ENCODE measurements at regions of chr11 and their contacts with region 1.

Region 1: DNA sequence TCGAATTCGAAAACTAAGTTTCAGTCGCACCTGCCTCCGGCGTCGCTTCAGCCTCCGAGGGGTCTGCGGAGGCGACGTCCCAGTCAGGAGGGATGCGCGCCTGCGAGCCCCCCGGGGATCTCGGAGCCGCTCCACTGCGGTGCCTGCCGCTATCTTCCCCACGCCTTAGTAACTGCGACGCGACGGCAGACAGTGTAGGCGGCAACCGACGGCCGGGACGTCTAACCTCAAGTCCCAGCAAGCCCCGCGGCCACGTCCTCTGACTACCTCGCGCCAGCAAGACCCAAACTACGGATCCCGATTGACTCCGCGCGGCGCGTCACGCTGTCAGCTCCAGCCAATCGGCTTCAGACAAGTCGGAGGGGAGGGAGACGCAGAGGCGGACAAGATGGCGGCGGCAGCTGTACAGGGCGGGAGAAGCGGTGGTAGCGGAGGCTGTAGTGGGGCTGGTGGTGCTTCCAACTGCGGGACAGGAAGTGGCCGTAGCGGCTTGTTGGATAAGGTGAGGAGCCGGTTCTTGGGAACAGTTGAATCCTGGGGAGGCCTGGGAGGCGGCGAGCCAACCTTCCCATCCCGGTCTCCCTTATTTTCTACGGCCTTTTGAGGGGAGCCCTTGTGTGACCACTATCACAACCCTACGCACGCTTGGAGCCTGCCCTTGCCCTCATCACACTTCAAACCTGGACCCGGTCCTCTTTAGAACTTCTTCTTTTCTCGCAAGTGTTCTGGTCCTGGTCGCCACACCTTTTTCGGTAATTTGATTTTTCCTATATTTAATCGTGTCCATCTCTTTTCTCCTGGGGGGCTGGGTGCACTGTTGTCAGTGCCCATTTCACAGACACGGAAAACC is at the starts of genes SPCS2 and XRRA1:
- DNase-seq: peak; percentile 90
- ATAC-seq: peak; percentile 93
- H3K4me3 Mint-ChIP-seq: peak within 1 kb of the TSS; percentile 97
- H3K27ac Mint-ChIP-seq: peak within 1 kb of the TSS; percentile 97
- H3K4me1 Mint-ChIP-seq: peaks cover 72% of the 10 kb centered on the region
- H3K27me3 Mint-ChIP-seq: no peaks in the 10 kb centered on the region
- CTCF ChIP-seq: no peak
- total RNA-seq, gene SPCS2: 129 and 138 TPM in 2 replicates
- total RNA-seq, gene XRRA1: 40.0 and 50.5 TPM in 2 replicates

Region 2: GRCh38 chr11:74592441-74593362 is 356.4 kb before region 1 on chr11 and contains the start of gene POLD3:
- CTCF ChIA-PET with region 1: no interaction called
- POLR2A ChIA-PET with region 1: no interaction called
- intact Hi-C with region 1: loop called (anchors 5 kb)
- DNase-seq: peak; percentile 83
- ATAC-seq: peak; percentile 99
- H3K4me3 Mint-ChIP-seq: peak within 1 kb of the TSS; percentile 94
- H3K27ac Mint-ChIP-seq: peak within 1 kb of the TSS; percentile 86
- H3K4me1 Mint-ChIP-seq: peaks cover 17% of the 10 kb centered on the region
- H3K27me3 Mint-ChIP-seq: no peaks in the 10 kb centered on the region
- CTCF ChIP-seq: no peak
- total RNA-seq, gene POLD3: 14.9 and 16.3 TPM in 2 replicates

Region 3: DNA sequence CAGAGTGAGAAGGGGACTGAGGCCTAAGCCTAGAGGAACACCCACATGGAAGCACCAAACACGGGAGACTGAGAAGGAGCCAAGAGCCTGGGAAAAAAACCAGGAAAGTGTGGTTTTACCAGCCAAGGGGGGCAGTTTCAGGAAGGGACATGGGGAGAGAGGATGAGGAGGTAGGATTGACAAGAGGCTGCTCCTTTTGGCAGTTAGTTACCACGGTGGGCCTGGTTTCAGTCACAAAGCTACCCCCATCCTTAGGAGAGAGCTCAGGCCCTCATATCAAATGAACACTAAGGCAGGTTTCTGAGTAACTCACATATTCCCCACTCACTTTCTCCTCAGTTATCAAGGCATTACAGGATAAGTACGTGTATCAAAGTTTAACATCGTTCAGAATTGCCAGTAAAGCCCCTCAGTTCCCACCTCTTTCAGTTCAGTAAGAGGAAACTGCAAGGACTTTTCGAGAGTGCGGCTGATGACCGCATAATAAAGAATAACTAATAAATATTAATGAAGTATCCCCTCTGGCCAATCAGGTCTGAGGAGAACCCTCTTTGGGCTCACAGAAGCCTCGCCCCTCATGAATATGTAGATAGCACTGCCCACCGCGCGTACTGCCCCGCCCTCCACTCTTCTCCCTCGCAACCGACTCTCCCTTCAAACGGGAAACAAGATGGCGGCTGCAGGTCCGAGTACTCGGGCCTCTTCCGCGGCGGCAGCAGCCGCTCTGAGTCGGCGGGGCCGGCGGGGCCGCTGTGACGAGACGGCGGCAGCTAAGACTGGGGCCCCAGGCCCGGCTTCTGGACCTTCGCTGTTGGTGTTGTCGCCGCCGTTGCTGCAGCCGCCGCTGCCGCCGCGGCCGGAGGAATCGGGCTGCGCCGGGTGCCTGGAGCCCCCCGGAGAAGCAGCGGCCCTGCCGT is 200.7 kb before region 1 on chr11 and contains the start of gene RNF169:
- CTCF ChIA-PET with region 1: no interaction called
- POLR2A ChIA-PET with region 1: no interaction called
- intact Hi-C with region 1: loop called (anchors 1 kb)
- DNase-seq: peak; percentile 82
- ATAC-seq: peak; percentile 98
- H3K4me3 Mint-ChIP-seq: peak within 1 kb of the TSS; percentile 90
- H3K27ac Mint-ChIP-seq: peak within 1 kb of the TSS; percentile 95
- H3K4me1 Mint-ChIP-seq: peaks cover 32% of the 10 kb centered on the region
- H3K27me3 Mint-ChIP-seq: no peaks in the 10 kb centered on the region
- CTCF ChIP-seq: no peak
- total RNA-seq, gene RNF169: 20.4 and 22.2 TPM in 2 replicates

Region 4: DNA sequence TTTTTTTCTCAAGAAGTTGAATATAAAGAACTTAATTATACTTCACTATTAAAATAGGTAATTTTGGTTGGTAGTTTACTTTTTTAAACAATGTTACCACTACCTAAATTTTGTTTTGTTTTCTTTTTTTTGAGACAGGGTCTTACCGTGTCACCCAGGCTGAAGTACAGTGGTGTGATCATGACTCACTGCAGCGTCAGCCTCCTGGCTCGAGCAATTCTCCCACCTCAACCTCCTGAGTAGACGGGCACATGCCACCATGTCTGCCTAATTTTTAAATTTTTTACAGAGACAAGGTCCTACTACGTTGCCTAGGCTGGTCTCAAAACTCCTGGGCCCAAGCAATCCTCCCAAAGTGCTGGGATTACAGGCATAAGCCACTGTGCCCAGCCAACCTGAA is 17.5 kb after region 1 on chr11:
- CTCF ChIA-PET with region 1: no interaction called
- POLR2A ChIA-PET with region 1: no interaction called
- intact Hi-C with region 1: no loop called
- DNase-seq: no peak
- ATAC-seq: no peak
- H3K4me3 Mint-ChIP-seq: no peak overlapping the region
- H3K27ac Mint-ChIP-seq: no peak overlapping the region
- H3K4me1 Mint-ChIP-seq: peaks cover 25% of the 10 kb centered on the region
- H3K27me3 Mint-ChIP-seq: no peaks in the 10 kb centered on the region
- CTCF ChIP-seq: no peak

Region 5: DNA sequence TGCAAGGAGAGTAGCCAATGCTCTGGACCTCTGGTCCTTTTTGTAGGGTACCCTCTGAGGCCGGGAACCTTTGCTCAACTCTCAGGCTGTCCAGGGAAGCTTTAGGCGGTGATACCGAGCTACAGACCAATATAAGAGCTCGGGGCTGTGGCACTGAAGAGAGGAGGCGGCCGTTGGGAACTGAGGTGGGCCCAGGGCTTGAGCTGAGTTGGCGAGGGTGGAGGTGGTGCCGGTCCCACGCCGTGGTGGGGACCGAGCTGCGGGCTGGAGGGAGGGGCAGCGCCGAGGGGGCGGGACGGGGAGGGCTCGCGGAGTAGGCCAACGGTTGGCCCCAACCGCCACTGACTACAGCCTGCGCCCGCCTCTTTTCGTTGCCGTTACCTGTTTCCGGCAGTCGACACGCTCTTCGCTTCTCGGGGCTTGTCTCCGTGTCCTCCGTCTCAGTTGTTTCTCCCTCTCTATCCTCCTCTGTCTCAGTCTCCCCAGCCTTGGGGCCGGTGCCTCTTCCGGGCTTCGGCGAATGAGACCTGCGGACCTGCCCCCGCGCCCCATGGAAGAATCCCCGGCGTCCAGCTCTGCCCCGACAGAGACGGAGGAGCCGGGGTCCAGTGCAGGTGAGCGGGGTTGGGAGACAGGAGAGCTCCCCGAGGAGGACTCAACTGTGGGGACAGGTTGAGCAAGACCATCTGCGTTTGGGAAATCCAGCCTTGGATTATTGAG is 39.6 kb after region 1 on chr11 and contains the start of gene NEU3:
- CTCF ChIA-PET with region 1: no interaction called
- POLR2A ChIA-PET with region 1: interaction called, 20 read pairs
- intact Hi-C with region 1: loop called (anchors 1 kb)
- DNase-seq: peak; percentile 69
- ATAC-seq: peak; percentile 97
- H3K4me3 Mint-ChIP-seq: peak within 1 kb of the TSS; percentile 97
- H3K27ac Mint-ChIP-seq: peak within 1 kb of the TSS; percentile 89
- H3K4me1 Mint-ChIP-seq: peaks cover 40% of the 10 kb centered on the region
- H3K27me3 Mint-ChIP-seq: no peaks in the 10 kb centered on the region
- CTCF ChIP-seq: no peak
- total RNA-seq, gene NEU3: 13.2 and 16.5 TPM in 2 replicates

Region 6: DNA sequence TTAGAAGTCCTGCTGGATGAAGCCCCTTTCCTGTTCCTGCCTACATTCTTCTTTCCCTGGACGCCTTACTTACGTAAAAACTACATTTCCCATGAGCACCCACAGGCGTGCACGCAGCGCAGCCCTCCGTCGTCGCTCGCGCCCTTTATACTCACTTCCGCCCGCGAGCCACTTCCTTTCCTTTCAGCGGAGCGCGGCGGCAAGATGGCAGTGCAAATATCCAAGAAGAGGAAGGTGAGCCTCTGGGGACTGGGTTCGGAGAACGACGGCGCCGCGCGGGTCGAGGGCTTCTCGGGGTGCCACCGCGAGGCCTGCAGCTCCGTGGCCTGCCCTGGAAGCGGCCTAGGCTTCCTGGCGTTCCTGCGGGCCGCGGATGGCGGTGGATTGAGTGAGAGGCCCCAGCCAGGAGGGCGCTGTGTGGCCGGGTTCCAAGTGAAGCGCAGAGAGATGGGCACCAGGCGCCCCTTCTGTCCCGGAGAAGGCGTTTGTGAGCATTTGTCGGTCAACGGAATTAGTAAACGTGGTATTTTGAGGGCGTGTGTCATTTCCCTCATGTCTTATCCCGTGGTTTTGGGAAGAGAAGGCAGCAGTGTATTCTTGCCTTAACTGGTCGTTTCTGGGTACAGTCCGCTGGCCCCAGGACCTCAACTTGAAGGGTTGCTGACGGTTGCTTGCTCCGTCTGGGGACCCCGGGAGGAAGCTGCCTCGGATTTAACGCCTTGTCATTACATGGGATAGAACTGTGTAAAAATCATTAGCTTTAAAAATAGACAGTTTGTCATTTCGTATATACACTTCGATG is 450.4 kb after region 1 on chr11 and contains the start of gene RPS3:
- CTCF ChIA-PET with region 1: no interaction called
- POLR2A ChIA-PET with region 1: no interaction called
- intact Hi-C with region 1: loop called (anchors 10 kb)
- DNase-seq: peak; percentile 83
- ATAC-seq: peak; percentile 91
- H3K4me3 Mint-ChIP-seq: peak within 1 kb of the TSS; percentile 99
- H3K27ac Mint-ChIP-seq: peak within 1 kb of the TSS; percentile 98
- H3K4me1 Mint-ChIP-seq: peaks cover 49% of the 10 kb centered on the region
- H3K27me3 Mint-ChIP-seq: peaks cover 5% of the 10 kb centered on the region
- CTCF ChIP-seq: no peak
- total RNA-seq, gene RPS3: 4,635 and 5,236 TPM in 2 replicates

Region 7: GRCh38 chr11:75525596-75526541 is 576.7 kb after region 1 on chr11 and contains the start of gene GDPD5:
- CTCF ChIA-PET with region 1: no interaction called
- POLR2A ChIA-PET with region 1: no interaction called
- intact Hi-C with region 1: loop called (anchors 5 kb)
- DNase-seq: peak; percentile 88
- ATAC-seq: peak; percentile 93
- H3K4me3 Mint-ChIP-seq: peak within 1 kb of the TSS; percentile 85
- H3K27ac Mint-ChIP-seq: no peak within 1 kb of the TSS
- H3K4me1 Mint-ChIP-seq: peaks cover 32% of the 10 kb centered on the region
- H3K27me3 Mint-ChIP-seq: peaks cover 3% of the 10 kb centered on the region
- CTCF ChIP-seq: no peak
- total RNA-seq, gene GDPD5: 22.2 and 23.9 TPM in 2 replicates

Region 8: DNA sequence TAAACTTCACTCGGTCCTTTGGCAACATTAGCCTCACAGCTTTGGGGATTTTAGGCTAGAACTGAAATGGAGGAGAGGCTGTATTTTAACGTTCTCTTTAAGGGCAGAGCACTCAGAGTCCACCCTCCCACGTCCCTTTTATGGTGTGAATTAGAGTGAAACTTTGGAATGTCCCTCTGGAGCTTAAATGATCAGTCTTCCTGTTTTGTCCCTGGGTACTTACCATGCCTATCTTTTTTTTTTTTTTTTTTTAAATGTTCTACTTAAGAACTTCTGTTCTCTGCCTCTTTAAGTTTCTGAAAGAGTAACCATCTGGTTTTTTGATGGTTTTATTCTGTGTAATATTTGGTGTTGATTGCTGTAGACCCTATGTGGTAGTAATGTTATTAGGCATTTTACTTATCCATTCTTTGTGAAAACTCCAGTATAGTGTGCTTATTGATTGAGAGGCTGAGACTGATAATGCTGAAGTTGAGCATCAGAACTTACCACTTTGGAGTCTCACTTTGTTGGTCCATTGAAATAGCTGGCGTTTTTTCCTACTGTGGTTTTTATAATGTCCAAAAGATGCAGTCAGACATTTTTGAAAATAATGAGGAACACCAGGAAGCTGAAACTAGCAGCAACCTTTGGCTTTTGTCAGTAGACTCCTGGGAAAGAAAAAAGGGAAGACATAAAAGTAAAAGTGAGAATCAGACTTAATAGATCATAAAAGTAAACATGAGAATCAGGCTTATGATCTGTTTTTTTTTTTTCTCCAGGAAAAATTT is 877.5 kb after region 1 on chr11:
- CTCF ChIA-PET with region 1: no interaction called
- POLR2A ChIA-PET with region 1: interaction called, 3 read pairs
- intact Hi-C with region 1: loop called (anchors 2 kb)
- DNase-seq: no peak
- ATAC-seq: no peak
- H3K4me3 Mint-ChIP-seq: peak overlapping the region; percentile 63
- H3K27ac Mint-ChIP-seq: peak overlapping the region; percentile 76
- H3K4me1 Mint-ChIP-seq: peaks cover 87% of the 10 kb centered on the region
- H3K27me3 Mint-ChIP-seq: no peaks in the 10 kb centered on the region
- CTCF ChIP-seq: no peak

Measured in activated B cell treated with CpG ODN at 0.5 μM for 24 hours (primary cell).